ENCODE measurements at regions of chr20 and their contacts with region 1.

Region 1: GRCh38 chr20:18431206-18431605 is 35.6 kb downstream of the DZANK1 start:
- DNase-seq: no peak
- H3K4me3 ChIP-seq: no peak overlapping the region
- H3K27ac ChIP-seq: no peak overlapping the region
- H3K4me1 ChIP-seq: peaks cover 4% of the 10 kb centered on the region
- H3K27me3 ChIP-seq: no peaks in the 10 kb centered on the region
- CTCF ChIP-seq: no peak

Region 2: DNA sequence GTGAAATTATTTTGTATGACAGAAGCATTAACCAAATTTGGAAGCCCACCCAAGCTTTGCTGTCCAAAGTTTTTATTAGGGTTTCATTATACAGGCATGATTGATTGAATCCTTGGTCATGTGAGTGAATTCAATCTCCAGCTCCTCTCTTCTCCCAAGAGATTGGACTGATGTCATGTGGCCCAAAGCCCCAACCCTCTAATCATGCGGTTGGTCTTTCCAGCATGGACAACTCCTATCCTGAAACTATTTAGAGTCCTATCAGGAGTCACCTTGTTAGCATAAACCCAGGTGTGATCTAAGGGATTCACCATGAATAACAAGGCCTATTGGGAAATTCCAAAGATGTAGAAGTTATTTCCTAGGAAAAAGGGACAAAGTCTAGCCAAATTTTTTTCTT is 46.6 kb after region 1 on chr20:
- CTCF ChIA-PET with region 1: no interaction called
- dilution Hi-C with region 1: loop called (anchors 5 kb)
- in situ Hi-C with region 1: no loop called
- intact Hi-C with region 1: no loop called
- DNase-seq: no peak
- H3K4me3 ChIP-seq: no peak overlapping the region
- H3K27ac ChIP-seq: no peak overlapping the region
- H3K4me1 ChIP-seq: no peaks in the 10 kb centered on the region
- H3K27me3 ChIP-seq: no peaks in the 10 kb centered on the region
- CTCF ChIP-seq: no peak

Region 3: DNA sequence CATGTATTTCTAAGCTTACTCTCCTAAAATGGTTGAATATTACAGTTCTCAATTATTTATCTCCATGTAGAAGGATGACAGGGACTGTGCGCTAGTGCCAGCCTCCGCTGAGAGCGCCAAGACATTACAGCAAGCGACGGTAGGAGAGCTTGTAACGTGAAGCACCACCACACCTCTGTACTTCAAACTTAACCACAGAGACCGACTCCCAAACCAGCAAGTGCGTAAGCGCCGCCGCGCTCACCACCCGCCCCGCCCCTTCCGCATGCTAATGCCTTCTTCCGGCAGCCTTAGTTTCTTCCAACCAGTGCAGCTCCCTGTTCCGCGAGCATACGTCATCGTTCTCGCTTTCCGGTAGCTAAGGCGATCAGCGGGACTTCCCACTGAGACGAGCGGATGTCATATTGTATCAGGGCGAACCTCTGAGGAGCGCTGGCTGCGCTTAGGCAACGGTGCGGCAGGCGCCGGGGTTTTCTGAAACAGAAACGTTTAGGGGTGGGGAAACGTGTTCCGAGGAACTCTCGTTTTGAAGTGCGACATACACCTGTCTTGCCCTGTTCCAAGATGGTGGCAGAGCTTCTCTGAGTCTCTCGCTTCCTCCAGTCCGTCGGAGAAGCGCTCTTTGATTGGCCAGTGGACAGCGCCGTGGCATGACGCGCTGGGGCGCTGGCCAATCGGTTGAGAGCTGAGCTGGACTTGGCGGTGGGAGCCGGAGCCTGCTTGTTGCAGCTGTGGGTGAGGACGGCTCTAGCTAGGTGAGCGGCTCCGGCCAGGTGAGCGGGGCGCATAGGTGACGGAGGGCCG is 76.2 kb after region 1 on chr20 and contains the start of gene SEC23B:
- CTCF ChIA-PET with region 1: no interaction called
- dilution Hi-C with region 1: no loop called
- in situ Hi-C with region 1: no loop called
- intact Hi-C with region 1: no loop called
- DNase-seq: peak; percentile 99
- H3K4me3 ChIP-seq: peak within 1 kb of the TSS; percentile 42 to 84 (median 68)
- H3K27ac ChIP-seq: peak within 1 kb of the TSS; percentile 90
- H3K4me1 ChIP-seq: peaks cover 15% of the 10 kb centered on the region
- H3K27me3 ChIP-seq: no peaks in the 10 kb centered on the region
- CTCF ChIP-seq: no peak
- total RNA-seq, gene SEC23B: 61.2 to 82.8 TPM